Gastrocnemius medialis (tissue), 4 donors: ENCODE measurements at regions of chr1 and their contacts with region 1.

Region 1: GRCh38 chr1:89603651-89604413 is 29.1 kb upstream of the LRRC8C start:
- DNase-seq: no peak
- ATAC-seq: peak in 1 of 2 donors; percentile 24
- H3K4me3 ChIP-seq: no peak overlapping the region
- H3K27ac ChIP-seq: no peak overlapping the region
- H3K4me1 ChIP-seq: peaks cover 15 to 35% of the 10 kb centered on the region in 2 donors
- H3K27me3 ChIP-seq: no peaks in the 10 kb centered on the region
- CTCF ChIP-seq: no peak
- POLR2A ChIP-seq: no peak

Region 2: GRCh38 chr1:89472952-89473351 is 130.9 kb before region 1 on chr1:
- in situ Hi-C with region 1: loop called in 1 of 4 experiments (anchors 5 kb)
- intact Hi-C with region 1: no loop called
- DNase-seq: no peak
- ATAC-seq: no peak
- H3K4me3 ChIP-seq: no peak overlapping the region
- H3K27ac ChIP-seq: no peak overlapping the region
- H3K4me1 ChIP-seq: no peaks in the 10 kb centered on the region
- H3K27me3 ChIP-seq: no peaks in the 10 kb centered on the region
- CTCF ChIP-seq: no peak
- POLR2A ChIP-seq: no peak